ENCODE measurements at regions of chr7 and their contacts with region 1.

Region 1: DNA sequence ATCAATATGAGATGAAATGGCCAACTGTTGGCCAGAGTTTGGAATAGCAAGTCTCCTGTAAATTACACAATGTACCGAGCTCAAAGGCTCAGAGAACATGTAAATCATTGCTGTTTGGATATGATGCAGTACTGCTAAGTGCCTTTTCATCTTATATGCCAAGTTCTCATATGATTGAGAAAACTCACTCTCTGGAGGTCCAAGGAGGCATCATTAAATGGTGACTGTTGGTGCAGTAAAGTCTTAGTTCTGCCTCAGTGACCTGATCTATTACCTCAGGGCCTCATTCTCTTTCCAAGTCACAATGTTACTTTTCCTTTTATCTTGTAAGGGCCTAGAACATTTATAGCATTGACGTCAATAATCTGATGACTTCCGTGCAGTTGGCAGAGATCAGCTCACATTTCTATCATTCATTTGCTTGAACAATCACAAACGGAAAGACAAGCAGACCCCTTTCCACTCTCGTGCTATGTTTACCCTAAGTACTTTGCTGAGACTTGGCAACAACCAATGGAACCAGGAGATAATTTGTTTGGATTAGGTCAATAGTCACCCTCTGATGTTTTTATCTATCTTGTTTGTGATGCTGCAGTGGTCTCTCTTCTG is 32.6 kb upstream of the PDK4 start:
- DNase-seq: no peak
- ATAC-seq: peak; percentile 79

Region 2: DNA sequence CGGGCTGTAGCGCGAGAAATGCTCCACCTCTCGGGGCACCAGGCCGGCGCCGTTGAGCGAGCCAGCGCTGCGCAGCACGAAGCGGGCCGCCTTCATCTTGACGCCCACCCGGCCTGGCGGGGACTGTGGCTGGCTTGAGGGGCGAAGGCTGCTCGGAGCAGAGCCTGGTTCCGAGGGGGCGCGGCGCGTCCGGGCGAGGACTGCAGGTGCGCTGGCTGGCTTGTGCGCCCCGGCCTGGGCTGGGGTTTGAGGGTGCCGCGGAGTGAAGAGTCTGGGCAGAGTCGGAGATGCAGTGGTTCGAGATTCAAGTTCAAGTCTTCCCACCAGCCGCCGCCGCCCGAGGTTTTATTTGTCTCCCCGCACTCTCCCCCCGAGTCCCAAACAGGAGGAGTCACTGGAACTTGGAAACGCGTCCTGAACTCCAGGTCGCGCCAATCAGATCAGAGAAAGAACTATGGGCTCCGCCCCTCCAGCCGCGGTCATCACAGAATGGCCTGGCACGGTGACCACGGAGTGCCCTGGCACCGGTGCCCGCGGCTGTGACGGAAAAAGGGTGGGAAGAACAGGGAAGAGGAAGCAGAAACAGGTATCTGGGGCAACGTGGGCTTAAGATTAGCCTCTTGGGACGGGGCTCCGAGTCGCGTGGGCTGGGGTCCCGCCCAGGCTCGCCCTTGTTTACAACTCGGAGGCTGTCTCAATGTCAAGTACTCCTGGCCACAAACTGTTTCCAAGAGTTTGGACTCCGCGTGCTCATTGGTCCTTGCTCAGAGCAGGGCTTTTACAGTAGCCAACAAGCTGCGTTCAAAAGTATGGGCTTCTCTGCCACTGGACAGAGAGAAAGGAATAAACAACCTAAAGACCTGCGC is 32.5 kb before region 1 on chr7 and contains the start of gene PDK4:
- intact Hi-C with region 1: loop called (anchors 1 kb)
- DNase-seq: peak; percentile 97
- ATAC-seq: peak; percentile 93
- total RNA-seq, gene PDK4: 431 TPM

Region 3: DNA sequence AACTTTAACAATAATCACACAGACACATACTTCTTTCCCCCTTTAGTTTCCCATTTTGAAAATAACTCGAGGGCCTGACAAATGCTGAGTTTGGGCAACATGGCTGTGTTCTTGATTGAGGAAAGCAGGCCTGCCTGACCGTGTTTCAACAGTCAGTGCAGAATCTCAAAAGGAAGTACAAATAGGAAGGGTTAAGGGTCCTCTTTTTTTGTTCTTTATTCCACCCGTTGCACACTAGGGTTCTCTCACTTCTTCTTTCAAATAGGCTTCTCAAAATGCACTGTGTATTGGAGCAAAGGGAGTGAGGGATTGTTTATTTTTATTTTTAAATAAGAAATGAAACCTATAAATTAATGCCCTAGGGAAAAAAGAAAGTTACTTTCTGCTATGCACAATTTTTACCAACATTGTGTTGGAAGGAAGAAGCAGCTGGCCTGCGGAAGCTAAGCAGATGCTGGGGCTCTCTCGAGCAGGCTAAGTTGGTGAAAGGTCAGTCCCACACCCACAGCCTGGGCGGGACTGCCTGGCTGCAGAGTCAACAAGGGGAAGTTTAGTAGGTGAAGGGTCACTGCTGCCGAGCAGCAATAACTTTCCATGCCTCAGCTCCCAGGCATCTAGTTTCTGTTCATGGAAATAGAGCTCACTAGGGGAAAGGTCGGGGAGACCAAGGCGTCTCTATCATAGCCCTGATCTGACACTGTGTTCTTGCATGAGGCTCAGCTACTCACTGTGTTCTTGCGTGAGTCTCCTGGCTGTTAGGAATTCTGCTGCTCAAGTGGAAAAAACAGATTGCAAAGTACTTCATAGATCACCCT is 20.4 kb before region 1 on chr7:
- intact Hi-C with region 1: loop called (anchors 1 kb)
- DNase-seq: peak; percentile 96
- ATAC-seq: peak; percentile 98

Region 4: GRCh38 chr7:95660023-95660434 is 31.1 kb after region 1 on chr7:
- intact Hi-C with region 1: loop called (anchors 5 kb)
- DNase-seq: no peak
- ATAC-seq: peak; percentile 86

Region 5: DNA sequence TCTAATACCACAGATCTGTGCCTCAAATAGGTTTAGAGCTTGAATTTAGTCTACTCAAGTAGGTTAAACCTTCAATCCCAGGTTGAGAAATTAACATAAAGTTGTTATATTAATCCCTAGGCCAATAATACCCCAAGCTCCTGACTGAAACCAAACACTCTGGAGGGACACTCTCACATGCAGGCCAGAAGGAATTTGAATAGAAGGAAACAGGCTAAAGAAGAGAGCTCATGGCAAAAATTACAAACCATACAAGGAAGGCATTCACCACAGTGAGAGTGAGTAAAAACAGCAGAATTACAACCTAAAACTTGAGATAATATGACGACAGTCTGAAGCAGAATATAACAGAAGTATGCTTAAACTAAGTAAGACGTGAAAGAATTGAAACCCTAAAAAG is 43.5 kb after region 1 on chr7:
- intact Hi-C with region 1: loop called (anchors 5 kb)
- DNase-seq: no peak
- ATAC-seq: no peak

Region 6: DNA sequence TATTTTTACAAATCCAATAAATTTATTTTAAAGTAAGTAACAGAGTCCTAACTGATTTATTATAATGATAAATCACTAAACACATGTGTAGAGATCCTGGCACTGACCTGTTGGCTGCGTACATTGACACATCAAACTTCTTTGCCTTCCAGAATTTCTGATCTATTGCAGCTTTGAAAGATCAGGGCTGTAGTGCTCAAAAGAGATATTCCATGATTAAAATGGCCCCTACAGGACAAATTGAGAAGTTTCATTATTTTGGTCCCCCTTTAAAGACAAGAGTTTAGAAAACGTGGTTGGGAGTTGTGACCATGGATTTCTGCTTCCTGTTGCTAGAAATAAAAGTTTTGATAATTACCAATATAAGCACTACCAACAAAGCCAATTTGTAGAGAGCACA is 55.1 kb after region 1 on chr7:
- intact Hi-C with region 1: loop called (anchors 5 kb)
- DNase-seq: no peak
- ATAC-seq: peak; percentile 71

Measured in Right ventricle myocardium inferior (tissue), 1 donor.